Transverse colon (tissue), 4 donors: ENCODE measurements at regions of chr11 and their contacts with region 1.

Region 1: GRCh38 chr11:66677599-66678375 is at the start of gene RBM4B:
- DNase-seq: peak; percentile 97
- H3K4me3 ChIP-seq: peak within 1 kb of the TSS; percentile 53 to 78 (median 68)
- H3K27ac ChIP-seq: peak within 1 kb of the TSS; percentile 90 to 99 (median 96)
- H3K4me1 ChIP-seq: peaks cover 17 to 37% (median 24%) of the 10 kb centered on the region in 4 donors
- H3K27me3 ChIP-seq: no peaks in the 10 kb centered on the region
- CTCF ChIP-seq: no peak
- EP300 ChIP-seq: no peak
- POLR2A ChIP-seq: peak; percentile 77
- total RNA-seq, gene RBM4B: 14.2 to 22.1 (median 15.5) TPM

Region 2: DNA sequence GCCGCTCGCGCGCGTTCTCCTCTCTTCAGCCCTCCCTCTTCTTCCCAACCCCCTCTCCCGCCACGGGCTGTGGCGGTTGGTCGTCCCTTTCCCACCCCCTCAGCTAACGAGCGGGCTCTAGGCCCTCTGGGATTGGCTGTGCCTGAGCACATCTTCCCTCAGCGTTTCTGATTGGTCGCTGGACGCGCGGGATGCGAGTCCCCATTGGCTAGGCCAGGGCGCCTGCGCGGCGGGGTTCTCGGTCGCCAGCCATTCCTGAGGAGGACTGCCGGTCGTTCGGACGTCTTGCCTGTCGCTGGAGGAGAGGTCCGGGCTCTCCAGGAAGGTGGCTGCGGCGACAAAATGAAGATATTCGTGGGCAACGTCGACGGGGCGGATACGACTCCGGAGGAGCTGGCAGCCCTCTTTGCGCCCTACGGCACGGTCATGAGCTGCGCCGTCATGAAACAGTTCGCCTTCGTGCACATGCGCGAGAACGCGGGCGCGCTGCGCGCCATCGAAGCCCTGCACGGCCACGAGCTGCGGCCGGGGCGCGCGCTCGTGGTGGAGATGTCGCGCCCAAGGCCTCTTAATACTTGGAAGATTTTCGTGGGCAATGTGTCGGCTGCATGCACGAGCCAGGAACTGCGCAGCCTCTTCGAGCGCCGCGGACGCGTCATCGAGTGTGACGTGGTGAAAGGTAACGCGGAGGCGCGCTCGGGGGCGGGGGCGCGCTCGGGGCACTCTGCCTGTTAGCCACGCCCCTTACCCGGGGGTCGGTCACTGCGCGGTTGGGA is 61.2 kb before region 1 on chr11 and contains the start of gene RBM14:
- in situ Hi-C with region 1: no loop called
- intact Hi-C with region 1: loop called (anchors 1 kb)
- DNase-seq: peak; percentile 99
- H3K4me3 ChIP-seq: peak within 1 kb of the TSS; percentile 51 to 88 (median 82)
- H3K27ac ChIP-seq: peak within 1 kb of the TSS; percentile 92 to 98 (median 98)
- H3K4me1 ChIP-seq: peaks cover 26 to 48% (median 43%) of the 10 kb centered on the region in 4 donors
- H3K27me3 ChIP-seq: no peaks in the 10 kb centered on the region
- CTCF ChIP-seq: no peak
- EP300 ChIP-seq: no peak
- POLR2A ChIP-seq: peak; percentile 100
- total RNA-seq, gene RBM14: 13.8 to 70.1 (median 47.0) TPM